ENCODE measurements at regions of chr2 and their contacts with region 1.

Region 1: DNA sequence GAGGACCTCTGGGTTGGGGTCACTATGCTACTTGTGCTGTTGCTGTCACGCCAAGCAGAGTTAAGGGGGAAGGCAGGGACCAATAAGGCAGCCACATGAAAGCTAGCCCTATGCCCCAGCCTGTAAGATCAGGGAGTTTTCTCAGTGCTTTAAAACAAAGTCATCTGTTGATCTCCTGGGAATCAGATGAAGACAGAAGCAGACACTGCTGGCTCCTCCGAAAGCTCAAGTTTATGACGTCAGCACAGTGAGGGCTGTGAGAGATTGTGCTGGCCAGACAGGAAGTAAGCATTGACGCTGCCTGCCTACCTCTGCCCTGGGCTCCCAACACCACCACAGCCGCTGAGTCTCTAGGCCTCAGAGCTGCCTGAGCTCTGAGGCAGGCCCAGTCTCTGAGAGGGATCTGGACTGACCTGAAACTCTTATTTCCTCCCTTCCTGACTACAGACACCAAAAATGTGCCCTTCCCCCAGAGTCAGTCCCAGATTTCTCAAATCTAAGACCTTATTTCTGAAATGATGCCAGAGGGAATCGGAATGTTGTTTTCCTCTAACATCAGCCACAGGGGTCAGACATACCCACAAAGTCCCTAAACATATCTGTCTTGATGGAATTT is 118.1 kb upstream of the EPAS1 start:
- DNase-seq: peak; percentile 87
- H3K4me3 ChIP-seq: no peak overlapping the region
- H3K27ac ChIP-seq: peak overlapping the region; percentile 95
- H3K27me3 ChIP-seq: no peaks in the 10 kb centered on the region
- CTCF ChIP-seq: no peak

Region 2: DNA sequence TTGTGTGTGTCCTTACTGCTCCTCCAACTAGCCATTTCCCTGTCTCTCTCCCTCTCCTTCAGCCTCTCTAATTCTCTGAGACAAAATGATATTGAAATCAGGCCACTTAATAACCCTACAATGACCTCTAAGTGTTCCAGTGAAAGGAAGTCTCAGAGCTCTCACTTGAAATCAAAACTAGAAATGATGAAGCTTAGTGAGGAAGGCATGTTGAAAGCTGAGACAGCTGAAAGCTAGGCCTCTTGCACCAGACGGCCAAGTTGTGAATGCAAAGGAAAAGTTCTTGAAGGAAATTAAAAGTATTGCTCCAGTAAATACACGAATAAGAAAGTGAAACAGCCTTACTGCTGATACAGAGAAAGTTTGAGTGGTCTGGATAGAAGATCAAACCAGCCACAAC is 454.8 kb before region 1 on chr2:
- CTCF ChIA-PET with region 1: no interaction called
- POLR2A ChIA-PET with region 1: no interaction called
- DNase-seq: no peak
- H3K4me3 ChIP-seq: no peak overlapping the region
- H3K27ac ChIP-seq: no peak overlapping the region
- H3K27me3 ChIP-seq: no peaks in the 10 kb centered on the region
- CTCF ChIP-seq: no peak

Region 3: DNA sequence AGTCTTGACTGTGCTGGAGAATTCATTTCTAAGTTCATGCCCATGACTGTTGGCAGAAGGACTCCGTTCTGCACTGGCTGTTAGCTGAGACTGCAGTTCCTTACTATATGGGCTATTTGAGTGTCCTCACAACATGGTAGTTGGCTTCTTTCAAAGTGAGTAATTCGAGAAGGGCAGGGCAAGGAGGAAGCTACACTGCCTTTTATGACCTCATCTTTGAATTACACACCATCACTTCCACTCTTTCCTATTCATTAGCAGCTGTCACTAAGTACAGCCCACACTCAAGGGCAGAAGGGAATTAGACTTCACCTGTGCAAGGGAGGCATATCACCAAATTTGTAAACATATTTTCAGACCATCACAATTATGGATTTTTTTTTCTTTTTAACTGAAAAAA is 62.2 kb after region 1 on chr2:
- CTCF ChIA-PET with region 1: no interaction called
- POLR2A ChIA-PET with region 1: interaction called, 10 read pairs
- DNase-seq: no peak
- H3K4me3 ChIP-seq: no peak overlapping the region
- H3K27ac ChIP-seq: no peak overlapping the region
- H3K27me3 ChIP-seq: peaks cover 11% of the 10 kb centered on the region
- CTCF ChIP-seq: no peak